CD8-positive, alpha-beta memory T cell (primary cell): ENCODE measurements at regions of chr1 and their contacts with region 1.

Region 1: GRCh38 chr1:21270086-21270689 is 20.1 kb downstream of the ECE1 start:
- DNase-seq: peak; percentile 65 to 84 (median 73)
- H3K4me3 ChIP-seq: no peak overlapping the region
- H3K4me3 Mint-ChIP-seq: peak overlapping the region in 1 of 7 donors; percentile 70
- H3K27ac ChIP-seq: no peak overlapping the region
- H3K27ac Mint-ChIP-seq: peak overlapping the region; percentile 19 to 94 (median 71)
- H3K4me1 ChIP-seq: peaks cover 19% of the 10 kb centered on the region
- H3K4me1 Mint-ChIP-seq: peaks cover 9 to 39% (median 31%) of the 10 kb centered on the region in 3 donors
- H3K27me3 ChIP-seq: no peaks in the 10 kb centered on the region
- H3K27me3 Mint-ChIP-seq: no peaks in the 10 kb centered on the region

Region 2: DNA sequence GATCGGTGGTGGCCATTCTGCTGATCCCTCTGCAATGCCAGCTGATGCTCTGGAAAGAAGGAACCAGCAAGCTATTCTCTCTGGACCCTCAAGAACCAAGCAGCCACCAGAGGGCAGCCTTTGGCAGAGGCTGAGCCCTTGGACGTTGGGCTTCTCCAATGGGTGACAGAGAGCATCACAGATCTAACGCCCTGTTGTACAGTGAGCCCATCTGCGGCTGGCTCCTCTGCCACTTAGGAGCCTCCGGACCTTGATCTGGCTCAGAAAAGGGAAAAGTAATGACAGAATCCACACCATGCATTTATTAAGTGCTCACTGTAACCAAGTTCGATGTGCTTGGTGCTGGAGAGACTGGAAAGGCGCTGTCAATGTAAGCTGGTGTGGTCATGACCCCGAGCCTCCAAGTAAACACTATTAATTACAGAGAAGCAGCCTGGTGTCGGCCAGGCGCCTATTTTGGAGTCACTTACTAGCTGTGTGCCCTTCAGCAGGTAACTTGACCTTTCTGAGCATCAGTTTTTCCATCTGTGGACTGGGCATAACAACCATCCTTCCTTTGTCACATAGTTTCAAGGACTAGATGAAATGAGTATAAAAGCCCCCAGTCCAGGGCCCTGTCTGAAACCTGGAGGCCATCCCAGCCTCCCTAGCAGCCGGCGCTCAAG is 14.8 kb before region 1 on chr1:
- CTCF ChIA-PET with region 1: interaction called, 51 read pairs
- POLR2A ChIA-PET with region 1: no interaction called
- DNase-seq: peak; percentile 69 to 89 (median 73)
- H3K4me3 ChIP-seq: no peak overlapping the region
- H3K4me3 Mint-ChIP-seq: peak overlapping the region in 1 of 7 donors; percentile 37
- H3K27ac ChIP-seq: no peak overlapping the region
- H3K27ac Mint-ChIP-seq: peak overlapping the region; percentile 4 to 89 (median 64)
- H3K4me1 ChIP-seq: peaks cover 20% of the 10 kb centered on the region
- H3K4me1 Mint-ChIP-seq: peaks cover 33 to 38% (median 33%) of the 10 kb centered on the region in 3 donors
- H3K27me3 ChIP-seq: no peaks in the 10 kb centered on the region
- H3K27me3 Mint-ChIP-seq: no peaks in the 10 kb centered on the region

Region 3: DNA sequence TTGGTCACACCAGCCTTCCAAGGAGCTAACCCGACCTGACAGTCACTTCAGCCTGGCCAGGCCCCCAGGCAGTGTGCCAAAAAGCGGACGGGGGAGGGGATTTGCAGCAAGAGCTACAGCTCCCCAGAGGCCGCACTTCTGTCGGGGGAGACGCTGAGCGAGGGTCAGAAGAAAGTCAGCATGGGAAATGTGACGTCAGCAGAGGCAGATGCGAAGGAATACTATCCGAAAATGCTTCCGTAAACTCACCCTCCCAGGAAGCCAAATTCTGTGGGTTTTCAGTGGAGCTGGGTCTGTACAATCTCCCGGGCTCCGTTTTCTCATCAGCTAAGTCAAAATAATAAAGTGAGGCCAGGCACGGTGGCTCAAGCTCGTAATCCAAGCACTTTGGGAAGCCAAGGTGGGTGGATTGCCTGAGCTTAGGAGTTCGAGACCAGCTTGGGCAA is 48.5 kb after region 1 on chr1:
- CTCF ChIA-PET with region 1: interaction called, 12 read pairs
- POLR2A ChIA-PET with region 1: interaction called, 6 read pairs
- DNase-seq: no peak
- H3K4me3 ChIP-seq: no peak overlapping the region
- H3K4me3 Mint-ChIP-seq: no peak overlapping the region
- H3K27ac ChIP-seq: no peak overlapping the region
- H3K27ac Mint-ChIP-seq: peak overlapping the region in 2 of 8 donors; percentile 40 to 75
- H3K4me1 ChIP-seq: peaks cover 19% of the 10 kb centered on the region
- H3K4me1 Mint-ChIP-seq: peaks cover 16 to 46% (median 34%) of the 10 kb centered on the region in 3 donors
- H3K27me3 ChIP-seq: no peaks in the 10 kb centered on the region
- H3K27me3 Mint-ChIP-seq: no peaks in the 10 kb centered on the region

Region 4: GRCh38 chr1:21334214-21335087 is 64.3 kb after region 1 on chr1:
- CTCF ChIA-PET with region 1: interaction called, 17 read pairs
- POLR2A ChIA-PET with region 1: interaction called, 16 read pairs
- DNase-seq: peak; percentile 74 to 91 (median 90)
- H3K4me3 ChIP-seq: peak overlapping the region; percentile 51
- H3K4me3 Mint-ChIP-seq: peak overlapping the region; percentile 76 to 91 (median 87)
- H3K27ac ChIP-seq: peak overlapping the region; percentile 69
- H3K27ac Mint-ChIP-seq: peak overlapping the region; percentile 91 to 99 (median 98)
- H3K4me1 ChIP-seq: peaks cover 84% of the 10 kb centered on the region
- H3K4me1 Mint-ChIP-seq: peaks cover 66 to 89% (median 84%) of the 10 kb centered on the region in 3 donors
- H3K27me3 ChIP-seq: no peaks in the 10 kb centered on the region
- H3K27me3 Mint-ChIP-seq: no peaks in the 10 kb centered on the region